ENCODE measurements at regions of chr10 and their contacts with region 1.

Region 1: DNA sequence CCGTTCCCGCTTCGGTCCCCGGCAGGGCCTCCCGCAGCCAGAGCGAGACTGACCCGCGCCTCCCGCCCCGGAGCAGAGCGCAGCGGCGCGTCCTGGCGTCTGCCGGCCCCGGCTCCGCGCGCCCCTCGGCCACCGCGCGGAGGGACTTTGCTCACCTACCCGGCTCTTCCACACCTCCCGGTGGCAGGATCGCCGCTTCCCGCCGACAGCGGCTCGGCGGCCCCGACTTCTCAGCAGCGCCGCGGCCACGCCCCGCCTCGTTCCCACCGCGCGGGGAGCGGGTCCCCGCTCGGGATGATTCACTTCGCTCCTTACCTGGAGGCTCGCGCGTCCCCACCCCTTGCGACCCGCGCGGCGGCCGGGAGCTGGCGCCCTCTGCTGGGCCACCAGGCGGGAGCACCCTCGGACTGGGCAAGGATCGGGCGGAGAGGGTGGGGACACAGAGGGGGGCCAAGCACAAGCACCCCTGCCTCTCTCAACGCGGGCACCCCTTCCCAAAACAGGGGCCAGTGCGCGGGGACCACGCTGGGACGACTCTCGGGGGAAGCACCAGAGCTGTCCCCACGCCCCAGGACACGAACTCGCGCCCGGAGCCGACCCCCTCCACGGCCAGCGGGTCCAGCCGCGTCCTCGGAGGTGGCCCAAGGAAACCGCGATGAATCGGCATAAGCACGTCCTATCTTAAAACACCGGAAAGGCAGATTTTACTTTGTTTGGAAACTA is 101.0 kb upstream of the SVIL start:
- DNase-seq: peak; percentile 92
- ATAC-seq: peak; percentile 86
- H3K4me3 Mint-ChIP-seq: peak overlapping the region; percentile 74
- H3K27ac Mint-ChIP-seq: no peak overlapping the region
- H3K4me1 Mint-ChIP-seq: peaks cover 33% of the 10 kb centered on the region
- H3K27me3 Mint-ChIP-seq: peaks cover 6% of the 10 kb centered on the region

Region 2: GRCh38 chr10:29517352-29517923 is 218.3 kb before region 1 on chr10:
- CTCF ChIA-PET with region 1: interaction called, 6 read pairs
- POLR2A ChIA-PET with region 1: no interaction called
- intact Hi-C with region 1: loop called in 1 of 2 experiments (anchors 1 kb)
- DNase-seq: peak; percentile 26
- ATAC-seq: no peak
- H3K4me3 Mint-ChIP-seq: no peak overlapping the region
- H3K27ac Mint-ChIP-seq: no peak overlapping the region
- H3K4me1 Mint-ChIP-seq: no peaks in the 10 kb centered on the region
- H3K27me3 Mint-ChIP-seq: no peaks in the 10 kb centered on the region

Region 3: DNA sequence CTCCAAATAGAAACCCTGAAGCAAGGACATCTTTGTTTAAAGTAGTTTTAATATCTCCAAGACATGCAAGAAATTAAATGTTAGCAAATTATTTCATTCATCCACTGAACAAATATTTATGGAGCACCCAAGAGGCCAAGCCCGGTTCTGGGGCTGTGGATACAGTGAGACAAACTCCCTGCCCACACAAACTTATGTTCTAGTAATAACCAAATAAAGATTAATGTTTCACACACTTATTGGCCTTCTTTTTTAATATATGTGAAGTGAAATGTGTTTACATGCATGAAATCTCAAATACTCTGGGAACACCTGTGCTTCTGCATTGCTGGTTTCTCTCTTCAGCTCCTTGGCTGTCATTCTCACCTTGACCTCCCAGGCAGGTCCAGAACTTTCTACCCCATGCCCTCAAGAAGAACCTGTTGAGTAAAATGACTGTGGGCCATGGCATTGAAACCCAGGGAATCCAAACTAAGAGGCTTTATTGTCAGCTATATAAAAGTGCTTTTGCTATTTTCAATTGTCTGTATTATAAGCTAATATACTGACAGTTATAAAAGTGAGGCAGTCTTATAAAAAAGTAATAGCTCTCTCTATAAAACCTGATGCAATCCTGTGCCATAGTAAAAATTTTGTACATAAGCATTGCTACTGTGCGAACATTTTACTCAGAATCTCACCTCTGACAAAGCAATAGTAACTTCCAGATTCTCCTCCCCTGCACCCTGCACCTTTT is 144.7 kb before region 1 on chr10:
- CTCF ChIA-PET with region 1: interaction called, 3 read pairs
- POLR2A ChIA-PET with region 1: no interaction called
- intact Hi-C with region 1: loop called (anchors 1 to 5 kb)
- DNase-seq: no peak
- ATAC-seq: no peak
- H3K4me3 Mint-ChIP-seq: peak overlapping the region; percentile 44
- H3K27ac Mint-ChIP-seq: peak overlapping the region; percentile 86
- H3K4me1 Mint-ChIP-seq: peaks cover 18% of the 10 kb centered on the region
- H3K27me3 Mint-ChIP-seq: no peaks in the 10 kb centered on the region

Region 4: DNA sequence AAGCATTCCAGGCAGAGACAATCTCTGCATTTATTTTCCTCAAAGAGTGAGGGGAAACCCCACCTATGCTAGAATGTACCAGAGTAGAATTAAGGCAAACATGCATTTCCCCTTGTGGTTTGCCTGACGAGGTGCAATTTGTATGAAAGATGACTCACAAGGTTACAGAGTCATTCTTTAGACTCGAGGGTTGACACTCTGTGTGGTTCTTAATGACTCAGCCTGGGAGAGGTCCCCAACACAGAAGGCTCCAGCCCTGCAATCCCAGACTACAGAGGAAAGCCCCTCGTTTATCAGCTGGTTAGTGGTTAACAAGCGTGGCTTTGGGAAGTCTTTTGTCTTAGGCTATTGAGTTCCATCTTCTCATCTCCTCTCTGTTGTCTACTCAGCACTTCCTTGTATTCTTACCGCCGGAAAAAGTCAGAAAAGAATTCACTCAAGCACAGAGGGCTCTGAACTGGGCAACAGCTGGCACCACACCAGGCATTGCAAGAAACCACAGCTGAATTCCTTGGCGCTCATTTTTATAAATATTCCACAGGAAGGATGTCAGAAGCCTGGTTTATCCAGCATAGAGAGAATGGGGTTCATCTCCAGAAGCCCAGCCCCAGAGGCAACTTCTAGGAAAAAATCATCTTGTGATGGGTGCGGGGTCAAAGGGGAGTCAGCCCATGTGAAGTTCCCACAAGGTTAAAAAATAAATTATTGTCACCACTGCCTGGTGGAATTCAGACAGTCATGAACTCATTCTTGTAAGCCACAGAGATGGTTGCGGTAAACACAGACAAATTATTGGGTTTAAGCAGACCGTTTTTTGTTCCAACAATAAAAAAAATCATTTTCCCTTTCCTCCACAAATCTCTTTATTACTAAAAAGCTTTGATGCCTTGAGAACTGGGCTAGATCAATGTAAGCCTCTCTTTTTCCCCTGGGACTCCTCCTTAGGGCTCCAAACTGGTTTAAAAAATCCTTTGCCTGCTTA is 76.5 kb before region 1 on chr10:
- CTCF ChIA-PET with region 1: no interaction called
- POLR2A ChIA-PET with region 1: interaction called, 5 read pairs
- intact Hi-C with region 1: loop called (anchors 1 kb)
- DNase-seq: peak; percentile 76
- ATAC-seq: peak; percentile 99
- H3K4me3 Mint-ChIP-seq: peak overlapping the region; percentile 32
- H3K27ac Mint-ChIP-seq: peak overlapping the region; percentile 6
- H3K4me1 Mint-ChIP-seq: peaks cover 40% of the 10 kb centered on the region
- H3K27me3 Mint-ChIP-seq: peaks cover 4% of the 10 kb centered on the region

Region 5: DNA sequence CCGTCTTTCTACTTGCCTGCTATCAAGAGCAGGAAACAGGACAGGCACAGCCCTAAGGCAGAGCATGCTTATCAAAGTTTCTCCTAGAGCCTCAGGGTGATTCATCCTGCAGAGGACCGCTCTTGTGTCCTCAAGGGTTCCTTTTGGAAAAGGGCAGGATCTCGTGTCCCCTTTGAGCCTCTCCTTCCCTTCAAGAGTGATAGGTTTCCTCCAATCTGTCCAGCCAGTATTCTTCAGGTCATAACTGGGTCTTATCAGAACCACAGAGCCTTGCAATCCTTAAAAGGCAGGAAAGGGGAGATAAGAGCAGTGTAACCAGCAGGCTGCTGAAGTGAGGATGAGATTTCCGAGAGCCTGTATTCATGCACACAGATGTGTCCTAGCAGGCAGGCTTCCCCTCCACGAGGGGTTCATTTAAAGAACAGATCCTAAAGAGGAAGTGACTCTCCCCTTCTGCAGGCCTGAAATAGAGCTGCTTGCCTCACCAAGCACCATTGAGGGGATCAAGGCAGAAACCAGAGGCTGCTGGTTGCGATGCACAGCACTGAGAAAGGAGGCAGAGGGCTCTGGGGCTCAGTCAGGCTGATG is 10.5 kb before region 1 on chr10:
- CTCF ChIA-PET with region 1: interaction called, 11 read pairs
- POLR2A ChIA-PET with region 1: no interaction called
- intact Hi-C with region 1: no loop called
- DNase-seq: no peak
- ATAC-seq: no peak
- H3K4me3 Mint-ChIP-seq: no peak overlapping the region
- H3K27ac Mint-ChIP-seq: no peak overlapping the region
- H3K4me1 Mint-ChIP-seq: peaks cover 42% of the 10 kb centered on the region
- H3K27me3 Mint-ChIP-seq: no peaks in the 10 kb centered on the region

Region 6: GRCh38 chr10:30027057-30028005 is 291.6 kb after region 1 on chr10:
- CTCF ChIA-PET with region 1: no interaction called
- POLR2A ChIA-PET with region 1: no interaction called
- intact Hi-C with region 1: loop called in 1 of 2 experiments (anchors 1 kb)
- DNase-seq: peak; percentile 92
- ATAC-seq: peak; percentile 98
- H3K4me3 Mint-ChIP-seq: peak overlapping the region; percentile 66
- H3K27ac Mint-ChIP-seq: peak overlapping the region; percentile 81
- H3K4me1 Mint-ChIP-seq: peaks cover 34% of the 10 kb centered on the region
- H3K27me3 Mint-ChIP-seq: peaks cover 46% of the 10 kb centered on the region